ENCODE measurements at regions of chr7 and their contacts with region 1.

Region 1: GRCh38 chr7:25862260-25863037 is 289.5 kb upstream of the NFE2L3 start:
- DNase-seq: peak; percentile 97
- H3K4me3 Mint-ChIP-seq: peak overlapping the region; percentile 83
- H3K27ac Mint-ChIP-seq: peak overlapping the region; percentile 86
- H3K4me1 Mint-ChIP-seq: peaks cover 46% of the 10 kb centered on the region
- H3K27me3 Mint-ChIP-seq: peaks cover 57% of the 10 kb centered on the region

Region 2: DNA sequence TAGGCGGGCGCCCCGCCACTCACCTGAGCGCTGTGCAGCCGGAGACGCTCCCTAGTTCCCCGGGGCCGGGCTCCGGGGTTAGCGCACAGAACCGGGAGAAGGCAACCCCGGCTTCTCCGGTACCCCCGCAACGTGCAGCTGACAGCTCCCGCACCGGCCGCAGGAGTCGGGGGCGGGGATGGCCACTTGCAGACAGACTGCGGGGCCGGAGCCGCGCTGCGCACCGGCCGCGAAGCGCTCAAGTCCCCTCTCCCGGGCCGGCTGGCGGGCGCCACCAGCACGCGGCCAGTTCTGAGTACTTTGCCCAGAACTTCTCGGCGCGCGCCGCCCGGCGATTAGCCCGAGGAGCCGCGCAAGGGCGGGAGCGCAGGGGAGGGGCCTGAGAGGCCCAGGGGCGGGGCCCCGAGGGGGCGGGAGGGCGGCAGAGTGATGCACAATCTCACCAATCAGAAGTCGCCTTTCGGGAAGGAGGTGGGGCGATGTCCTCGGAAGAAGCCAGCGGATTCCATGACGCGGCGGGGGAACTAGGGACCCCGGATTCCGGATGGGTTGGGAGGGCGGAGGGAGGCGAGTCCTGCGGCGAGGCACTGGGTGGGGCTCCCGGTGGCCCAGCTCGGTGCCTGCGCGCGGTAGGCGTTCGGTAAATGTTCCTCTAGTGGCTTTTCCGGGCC is 882.5 kb before region 1 on chr7 and contains the start of gene OSBPL3:
- intact Hi-C with region 1: loop called (anchors 10 kb)
- DNase-seq: peak; percentile 91
- H3K4me3 Mint-ChIP-seq: peak within 1 kb of the TSS; percentile 96
- H3K27ac Mint-ChIP-seq: peak within 1 kb of the TSS; percentile 96
- H3K4me1 Mint-ChIP-seq: peaks cover 58% of the 10 kb centered on the region
- H3K27me3 Mint-ChIP-seq: peaks cover 2% of the 10 kb centered on the region
- total RNA-seq, gene OSBPL3: 90.6 and 101 TPM in 2 replicates

Region 3: GRCh38 chr7:25894902-25895791 is 32.7 kb after region 1 on chr7:
- intact Hi-C with region 1: loop called (anchors 1 kb)
- DNase-seq: peak; percentile 51
- H3K4me3 Mint-ChIP-seq: peak overlapping the region; percentile 3
- H3K27ac Mint-ChIP-seq: no peak overlapping the region
- H3K4me1 Mint-ChIP-seq: peaks cover 33% of the 10 kb centered on the region
- H3K27me3 Mint-ChIP-seq: peaks cover 6% of the 10 kb centered on the region

Region 4: DNA sequence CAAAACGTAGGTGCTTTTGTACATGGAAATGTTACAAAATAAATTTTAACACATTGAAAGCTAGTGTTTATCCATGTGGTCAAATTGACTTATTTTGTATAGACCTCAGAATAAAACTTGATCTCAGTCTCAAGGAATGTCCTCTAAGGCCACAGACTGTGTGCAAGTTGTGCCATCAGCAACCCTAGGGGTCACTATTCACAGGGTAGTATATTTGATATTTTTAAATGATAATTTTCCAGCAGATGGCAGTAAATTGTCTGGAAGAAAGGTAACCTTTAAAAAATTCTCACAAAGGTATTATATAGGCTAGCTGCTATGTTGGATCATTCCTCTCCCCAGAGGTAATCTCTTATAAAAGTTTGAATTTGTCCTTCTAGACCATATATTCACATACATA is 416.3 kb after region 1 on chr7:
- intact Hi-C with region 1: loop called (anchors 1 kb)
- DNase-seq: no peak
- H3K4me3 Mint-ChIP-seq: peak overlapping the region; percentile 47
- H3K27ac Mint-ChIP-seq: no peak overlapping the region
- H3K4me1 Mint-ChIP-seq: peaks cover 22% of the 10 kb centered on the region
- H3K27me3 Mint-ChIP-seq: peaks cover 3% of the 10 kb centered on the region

Region 5: GRCh38 chr7:26864309-26865093 is 1002.1 kb after region 1 on chr7 and contains the start of gene SKAP2:
- intact Hi-C with region 1: loop called (anchors 1 kb)
- DNase-seq: peak; percentile 83
- H3K4me3 Mint-ChIP-seq: peak within 1 kb of the TSS; percentile 93
- H3K27ac Mint-ChIP-seq: peak within 1 kb of the TSS; percentile 78
- H3K4me1 Mint-ChIP-seq: peaks cover 21% of the 10 kb centered on the region
- H3K27me3 Mint-ChIP-seq: peaks cover 29% of the 10 kb centered on the region
- total RNA-seq, gene SKAP2: 3.2 and 3.3 TPM in 2 replicates

Region 6: GRCh38 chr7:27739909-27740448 is 1877.5 kb after region 1 on chr7 and contains the start of gene TAX1BP1:
- intact Hi-C with region 1: loop called (anchors 5 kb)
- DNase-seq: peak; percentile 93
- H3K4me3 Mint-ChIP-seq: peak within 1 kb of the TSS; percentile 92
- H3K27ac Mint-ChIP-seq: peak within 1 kb of the TSS; percentile 98
- H3K4me1 Mint-ChIP-seq: peaks cover 41% of the 10 kb centered on the region
- H3K27me3 Mint-ChIP-seq: peaks cover 2% of the 10 kb centered on the region
- total RNA-seq, gene TAX1BP1: 88.6 and 90.9 TPM in 2 replicates

Measured in activated T-helper 1 cell treated with anti-CD3 and anti-CD28 coated beads, Interleukin-12 subunit alpha, Interleukin-12 subunit beta, Interleukin-2, Interleukin-4 antibody, amounts not matched to agents 30 ng/mL and 10 ng/mL and 1 ng/mL, durations not matched to agents 14 hours and 24 hours and 36 hours (primary cell).